HepG2 (cell line): ENCODE measurements at regions of chr1 and their contacts with region 1.

Region 1: DNA sequence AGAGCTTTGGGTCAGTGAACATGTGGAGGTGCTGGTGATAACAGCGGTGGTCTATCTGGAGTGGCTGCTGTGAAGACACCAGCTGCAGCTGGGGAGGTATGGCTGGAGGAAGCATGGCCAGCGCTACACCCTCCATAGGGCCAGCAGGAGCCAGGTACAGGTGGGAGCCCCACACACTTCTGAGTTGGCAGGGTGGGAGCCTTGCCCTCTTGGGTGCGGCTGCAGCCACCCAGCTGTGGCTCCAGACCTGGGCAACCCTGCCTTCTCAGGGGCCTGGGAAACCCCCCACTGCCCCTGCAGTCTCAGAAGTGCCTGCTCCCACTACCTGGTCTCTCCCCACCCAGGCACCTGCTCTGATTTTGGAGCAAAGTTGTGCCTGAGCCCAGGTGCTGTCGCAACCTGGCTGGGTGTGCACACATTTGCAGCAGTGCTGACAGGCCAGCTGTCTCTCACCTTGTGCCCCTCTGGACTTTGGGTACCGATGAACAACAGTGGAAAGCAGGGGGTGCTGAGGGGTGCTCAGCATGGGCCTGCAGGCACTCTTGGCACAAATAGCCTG is 76.2 kb downstream of the DPYD start:
- DNase-seq: no peak
- ATAC-seq: no peak
- H3K4me3 ChIP-seq: no peak overlapping the region
- H3K27ac ChIP-seq: no peak overlapping the region
- H3K4me1 ChIP-seq: no peaks in the 10 kb centered on the region
- H3K27me3 ChIP-seq: no peaks in the 10 kb centered on the region
- CTCF ChIP-seq: no peak
- EP300 ChIP-seq: no peak
- POLR2A ChIP-seq: no peak
- RAD21 ChIP-seq: no peak

Region 2: GRCh38 chr1:97654876-97655585 is 189.6 kb before region 1 on chr1:
- CTCF ChIA-PET with region 1: no interaction called
- POLR2A ChIA-PET with region 1: no interaction called
- in situ Hi-C with region 1: no loop called
- intact Hi-C with region 1: no loop called
- DNase-seq: no peak
- ATAC-seq: no peak
- H3K4me3 ChIP-seq: no peak overlapping the region
- H3K27ac ChIP-seq: no peak overlapping the region
- H3K4me1 ChIP-seq: no peaks in the 10 kb centered on the region
- H3K27me3 ChIP-seq: no peaks in the 10 kb centered on the region
- CTCF ChIP-seq: no peak
- EP300 ChIP-seq: no peak
- POLR2A ChIP-seq: no peak
- RAD21 ChIP-seq: no peak

Region 3: DNA sequence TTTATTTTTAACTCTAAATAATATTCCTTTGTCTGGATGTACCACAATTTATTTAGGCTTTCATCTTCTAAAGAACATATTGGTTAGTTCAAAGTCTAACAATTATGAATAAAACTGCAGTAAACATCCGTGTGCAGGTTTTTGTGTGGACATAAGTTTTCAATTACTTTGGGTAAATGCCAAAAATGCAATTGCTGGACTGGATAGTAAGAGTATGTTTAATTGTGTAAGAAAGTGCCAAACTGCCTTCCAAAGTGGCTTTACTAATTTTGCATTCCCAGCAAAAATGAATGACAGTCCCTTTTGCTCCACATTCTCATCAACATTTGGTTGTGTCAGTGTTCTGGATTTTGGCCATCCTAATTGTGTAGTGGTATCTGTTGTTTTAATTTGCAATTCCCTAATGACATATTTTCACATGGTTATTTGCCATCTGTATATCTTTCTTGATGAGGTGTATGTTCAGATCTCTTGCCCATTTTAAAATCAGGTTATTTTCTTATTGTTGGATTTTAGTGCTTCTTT is 37.6 kb before region 1 on chr1:
- CTCF ChIA-PET with region 1: no interaction called
- POLR2A ChIA-PET with region 1: no interaction called
- in situ Hi-C with region 1: no loop called
- intact Hi-C with region 1: no loop called
- DNase-seq: no peak
- ATAC-seq: no peak
- H3K4me3 ChIP-seq: no peak overlapping the region
- H3K27ac ChIP-seq: no peak overlapping the region
- H3K4me1 ChIP-seq: peaks cover 4% of the 10 kb centered on the region; the same call in 1 of the 2 replicates
- H3K27me3 ChIP-seq: no peaks in the 10 kb centered on the region
- CTCF ChIP-seq: no peak
- EP300 ChIP-seq: no peak
- POLR2A ChIP-seq: no peak
- RAD21 ChIP-seq: no peak

Region 4: GRCh38 chr1:97886199-97886598 is 41.6 kb after region 1 on chr1:
- CTCF ChIA-PET with region 1: no interaction called
- POLR2A ChIA-PET with region 1: no interaction called
- in situ Hi-C with region 1: no loop called
- intact Hi-C with region 1: loop called (anchors 1 kb)
- DNase-seq: no peak
- ATAC-seq: no peak
- H3K4me3 ChIP-seq: no peak overlapping the region
- H3K27ac ChIP-seq: no peak overlapping the region
- H3K4me1 ChIP-seq: no peaks in the 10 kb centered on the region
- H3K27me3 ChIP-seq: no peaks in the 10 kb centered on the region
- CTCF ChIP-seq: no peak
- EP300 ChIP-seq: no peak
- POLR2A ChIP-seq: no peak
- RAD21 ChIP-seq: no peak